Panc1 (cell line): ENCODE measurements at regions of chr6 and their contacts with region 1.

Region 1: DNA sequence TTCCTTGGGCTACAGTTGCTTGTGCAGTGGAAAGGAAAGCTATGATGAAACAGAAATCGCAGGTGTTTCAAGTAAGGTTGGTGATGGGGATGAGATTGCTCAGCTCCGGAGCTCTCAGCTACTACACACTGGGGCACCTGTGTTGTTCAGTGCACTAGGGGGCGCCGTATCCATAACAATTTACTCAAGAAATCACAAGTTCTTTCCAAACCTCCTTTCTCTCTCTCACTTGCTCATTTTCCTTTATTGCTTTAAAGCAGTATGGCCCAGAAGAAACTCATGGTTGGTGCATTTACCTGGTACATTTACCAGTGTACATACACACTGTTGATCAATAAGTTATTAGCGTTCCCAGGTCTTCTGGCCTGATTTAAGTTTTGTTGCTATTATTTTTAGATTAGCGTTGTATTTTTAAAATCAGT is 235.2 kb upstream of the TAB2 start:
- DNase-seq: peak; percentile 56
- ATAC-seq: peak; percentile 93
- H3K4me3 ChIP-seq: no peak overlapping the region
- H3K27ac ChIP-seq: no peak overlapping the region
- H3K4me1 ChIP-seq: no peaks in the 10 kb centered on the region
- H3K27me3 ChIP-seq: peaks cover 3% of the 10 kb centered on the region; the same call in 1 of the 2 replicates
- CTCF ChIP-seq: peak; percentile 80

Region 2: DNA sequence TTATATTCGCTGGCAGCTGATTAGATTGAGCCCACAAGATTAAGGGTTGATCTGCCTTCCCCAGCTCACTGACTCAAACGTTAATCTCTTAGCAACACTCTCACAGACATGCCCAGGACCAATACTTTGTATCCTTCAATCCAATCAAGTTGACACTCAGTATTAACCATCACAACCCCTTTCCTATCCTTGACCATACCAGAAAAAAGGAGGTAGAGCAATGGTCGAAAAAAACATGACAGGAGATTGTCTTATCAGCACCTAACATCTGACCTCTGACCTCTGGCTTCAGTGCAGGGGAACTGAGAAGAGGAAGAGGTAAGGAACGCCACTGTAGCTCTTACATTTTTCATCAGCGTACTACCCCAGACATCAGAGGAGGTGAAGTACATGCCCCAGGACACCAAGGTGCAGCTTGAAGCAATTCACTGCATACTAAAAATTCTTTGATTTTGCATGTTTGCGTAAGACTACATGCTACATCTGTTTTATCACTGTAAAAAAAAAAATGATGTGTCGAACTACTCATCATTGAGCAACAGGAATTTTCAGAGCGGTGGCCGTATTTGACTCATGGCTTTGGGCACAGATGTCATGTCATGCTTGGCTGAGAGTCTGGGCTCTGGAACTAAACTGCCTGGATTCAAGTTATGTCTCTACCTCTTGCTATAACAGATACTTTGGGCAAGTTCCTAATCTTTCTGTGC is 47.2 kb after region 1 on chr6:
- CTCF ChIA-PET with region 1: no interaction called
- POLR2A ChIA-PET with region 1: no interaction called
- in situ Hi-C with region 1: no loop called
- intact Hi-C with region 1: no loop called
- DNase-seq: no peak
- ATAC-seq: no peak
- H3K4me3 ChIP-seq: no peak overlapping the region
- H3K27ac ChIP-seq: no peak overlapping the region
- H3K4me1 ChIP-seq: no peaks in the 10 kb centered on the region
- H3K27me3 ChIP-seq: no peaks in the 10 kb centered on the region
- CTCF ChIP-seq: no peak

Region 3: DNA sequence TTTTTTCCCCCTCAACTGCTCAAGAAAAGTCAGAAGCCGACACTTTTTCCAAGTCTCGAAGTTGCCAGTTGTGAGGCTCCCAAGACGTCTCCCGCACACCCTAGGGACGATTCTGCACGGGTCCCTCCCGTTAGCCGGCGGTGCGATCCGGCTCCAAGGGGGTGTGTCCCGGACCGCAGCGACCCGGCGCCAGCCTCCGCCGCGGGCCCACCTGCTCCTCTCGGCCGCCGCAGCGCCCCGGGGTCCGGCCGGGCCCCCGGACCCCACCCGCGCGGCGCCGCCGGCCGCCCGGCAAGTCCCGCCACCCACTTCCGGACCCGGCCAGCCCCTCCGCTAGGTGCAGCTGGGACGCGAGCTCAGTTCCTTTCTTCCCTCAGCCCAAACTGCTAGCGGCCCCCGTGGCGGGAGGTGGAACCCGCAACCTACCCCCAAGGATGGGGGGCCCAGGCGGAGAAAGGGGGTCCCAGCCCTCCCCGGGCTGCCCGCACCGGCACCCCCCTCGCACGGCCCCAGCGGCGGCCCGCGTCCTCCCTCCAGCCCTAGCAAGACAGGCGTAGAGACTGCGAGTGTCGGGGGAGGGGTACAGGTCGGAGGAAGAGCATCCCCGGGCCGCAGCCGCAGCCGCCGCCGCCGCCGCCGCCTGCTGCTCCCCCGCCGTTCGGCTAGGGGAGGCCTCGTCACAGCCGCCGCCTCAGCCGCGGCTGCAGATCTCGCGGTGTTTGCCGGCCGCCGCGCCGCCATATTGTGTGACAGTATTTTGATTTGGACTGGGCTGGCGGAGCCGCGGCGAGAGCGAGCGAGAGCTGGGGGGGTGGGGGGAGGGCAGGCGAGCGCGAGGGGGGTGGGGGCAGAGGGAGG is 234.7 kb after region 1 on chr6:
- CTCF ChIA-PET with region 1: no interaction called
- POLR2A ChIA-PET with region 1: no interaction called
- in situ Hi-C with region 1: no loop called
- intact Hi-C with region 1: loop called (anchors 10 kb)
- DNase-seq: no peak
- ATAC-seq: peak; percentile 95
- H3K4me3 ChIP-seq: peak overlapping the region; percentile 60 to 83
- H3K27ac ChIP-seq: peak overlapping the region; percentile 82
- H3K4me1 ChIP-seq: peaks cover 23% of the 10 kb centered on the region
- H3K27me3 ChIP-seq: peaks cover 5% of the 10 kb centered on the region; the same call in 1 of the 2 replicates
- CTCF ChIP-seq: peak; percentile 1; the same call in 1 of the 2 replicates

Region 4: DNA sequence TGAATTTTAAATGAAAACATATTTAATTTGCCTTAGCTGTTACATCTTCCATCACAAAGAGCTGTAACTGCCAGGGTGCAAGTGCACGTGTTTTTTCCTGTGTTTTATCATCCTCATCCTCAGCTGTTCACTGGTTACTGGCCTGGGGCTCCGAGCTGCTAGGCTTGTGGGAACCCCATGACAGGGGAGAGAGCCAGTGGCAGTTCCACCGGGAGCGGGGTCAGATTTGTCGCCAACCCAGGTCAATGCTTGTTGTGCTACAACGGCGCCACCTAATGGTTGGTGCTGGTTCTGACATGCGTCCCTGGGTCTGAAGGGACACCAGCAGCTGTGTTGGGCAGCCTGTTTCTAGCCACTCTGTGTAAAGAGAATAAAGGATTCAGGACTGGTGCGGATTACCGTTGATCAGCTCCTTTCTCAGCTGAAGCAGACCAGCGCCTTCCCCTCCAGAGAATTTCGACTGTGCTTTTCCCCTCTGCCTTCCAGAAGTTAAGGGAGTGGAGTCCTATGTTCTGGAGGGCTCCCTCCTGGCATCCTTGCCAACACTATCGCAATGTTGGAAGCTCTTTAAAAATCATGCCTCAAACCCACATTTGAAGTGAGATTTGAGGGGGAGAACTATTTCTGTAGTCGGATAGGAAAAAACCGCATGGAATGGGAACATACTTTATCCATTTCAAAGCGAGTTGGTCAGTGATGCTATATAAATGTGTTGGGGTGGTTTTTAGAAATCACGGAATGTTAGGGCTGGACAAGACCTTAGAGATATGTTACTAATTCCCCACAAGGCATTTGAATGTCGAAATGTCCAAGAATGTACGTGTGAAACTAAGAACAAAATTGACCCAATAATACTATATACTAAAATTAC is 349.8 kb after region 1 on chr6:
- CTCF ChIA-PET with region 1: interaction called, 6 read pairs
- POLR2A ChIA-PET with region 1: no interaction called
- in situ Hi-C with region 1: no loop called
- intact Hi-C with region 1: loop called (anchors 1 kb)
- DNase-seq: peak; percentile 72
- ATAC-seq: peak; percentile 98
- H3K4me3 ChIP-seq: no peak overlapping the region
- H3K27ac ChIP-seq: no peak overlapping the region
- H3K4me1 ChIP-seq: peaks cover 4% of the 10 kb centered on the region
- H3K27me3 ChIP-seq: no peaks in the 10 kb centered on the region
- CTCF ChIP-seq: peak; percentile 91

Region 5: DNA sequence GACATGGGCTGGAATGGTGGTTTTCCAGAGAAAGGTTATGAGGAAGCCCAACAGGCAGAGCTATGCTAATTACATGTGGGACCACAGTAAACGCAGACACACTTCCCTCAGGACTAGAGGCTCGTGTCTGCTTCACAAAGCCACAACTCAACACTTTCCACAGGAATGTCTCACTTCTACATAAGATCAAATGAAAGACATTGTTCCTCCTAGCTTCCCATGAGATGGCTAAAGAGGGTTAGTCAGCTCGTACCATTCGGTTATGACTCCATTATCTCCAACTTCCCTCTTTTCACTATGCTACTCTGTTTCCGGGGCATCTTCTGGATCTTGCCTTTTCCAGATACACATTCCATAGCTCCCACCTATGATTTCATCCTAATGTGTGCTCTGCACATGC is 431.6 kb after region 1 on chr6:
- CTCF ChIA-PET with region 1: no interaction called
- POLR2A ChIA-PET with region 1: no interaction called
- in situ Hi-C with region 1: no loop called
- intact Hi-C with region 1: loop called (anchors 5 kb)
- DNase-seq: no peak
- ATAC-seq: no peak
- H3K4me3 ChIP-seq: no peak overlapping the region
- H3K27ac ChIP-seq: no peak overlapping the region
- H3K4me1 ChIP-seq: no peaks in the 10 kb centered on the region
- H3K27me3 ChIP-seq: no peaks in the 10 kb centered on the region
- CTCF ChIP-seq: no peak